Activated naive CD4-positive, alpha-beta T cell treated with anti-CD3 and anti-CD28 coated beads, Interleukin-2, amount 10 ng/mL, durations not matched to agents 7 days and 5 days (primary cell): ENCODE measurements at regions of chr22 and their contacts with region 1.

Region 1: GRCh38 chr22:36470162-36470993 is 11.1 kb downstream of the TXN2 start:
- DNase-seq: peak; percentile 90
- H3K4me3 Mint-ChIP-seq: no peak overlapping the region
- H3K27ac Mint-ChIP-seq: peak overlapping the region; percentile 52
- H3K4me1 Mint-ChIP-seq: peaks cover 35% of the 10 kb centered on the region
- H3K27me3 Mint-ChIP-seq: no peaks in the 10 kb centered on the region

Region 2: GRCh38 chr22:36156515-36157419 is 313.6 kb before region 1 on chr22:
- CTCF ChIA-PET with region 1: no interaction called
- DNase-seq: peak; percentile 73
- H3K4me3 Mint-ChIP-seq: peak overlapping the region; percentile 99
- H3K27ac Mint-ChIP-seq: peak overlapping the region; percentile 96
- H3K4me1 Mint-ChIP-seq: peaks cover 89% of the 10 kb centered on the region
- H3K27me3 Mint-ChIP-seq: no peaks in the 10 kb centered on the region

Region 3: DNA sequence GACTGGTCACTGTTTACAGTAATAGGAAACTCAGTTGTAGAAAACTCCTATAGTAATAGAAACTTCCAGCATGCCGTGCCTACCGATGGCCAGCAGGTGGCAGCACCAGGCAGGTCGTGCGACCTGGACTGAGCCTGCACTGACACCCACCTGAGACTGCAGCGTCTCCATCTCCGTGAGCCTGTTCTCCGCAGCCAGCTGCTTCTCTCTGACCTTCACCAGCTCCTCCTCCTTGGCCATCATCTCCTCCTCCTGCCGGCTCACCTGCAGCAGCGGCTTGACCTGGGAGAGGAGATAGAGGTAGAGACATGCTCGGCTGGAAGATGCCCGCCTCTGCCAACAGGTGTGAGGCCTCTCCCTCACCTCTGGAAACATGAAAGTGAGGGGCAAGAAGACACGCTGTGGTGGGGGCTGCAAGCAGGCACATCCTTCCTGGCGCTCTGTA is 169.0 kb before region 1 on chr22:
- CTCF ChIA-PET with region 1: interaction called, 88 read pairs
- DNase-seq: peak; percentile 87
- H3K4me3 Mint-ChIP-seq: no peak overlapping the region
- H3K27ac Mint-ChIP-seq: peak overlapping the region; percentile 74
- H3K4me1 Mint-ChIP-seq: peaks cover 12% of the 10 kb centered on the region
- H3K27me3 Mint-ChIP-seq: peaks cover 3% of the 10 kb centered on the region

Region 4: GRCh38 chr22:36323182-36323854 is 147.1 kb before region 1 on chr22:
- CTCF ChIA-PET with region 1: interaction called, 16 read pairs
- DNase-seq: no peak
- H3K4me3 Mint-ChIP-seq: no peak overlapping the region
- H3K27ac Mint-ChIP-seq: peak overlapping the region; percentile 33
- H3K4me1 Mint-ChIP-seq: peaks cover 24% of the 10 kb centered on the region
- H3K27me3 Mint-ChIP-seq: no peaks in the 10 kb centered on the region

Region 5: GRCh38 chr22:36331306-36331911 is 139.0 kb before region 1 on chr22:
- CTCF ChIA-PET with region 1: interaction called, 30 read pairs
- DNase-seq: peak; percentile 88
- H3K4me3 Mint-ChIP-seq: peak overlapping the region; percentile 87
- H3K27ac Mint-ChIP-seq: peak overlapping the region; percentile 99
- H3K4me1 Mint-ChIP-seq: peaks cover 99% of the 10 kb centered on the region
- H3K27me3 Mint-ChIP-seq: no peaks in the 10 kb centered on the region

Region 6: DNA sequence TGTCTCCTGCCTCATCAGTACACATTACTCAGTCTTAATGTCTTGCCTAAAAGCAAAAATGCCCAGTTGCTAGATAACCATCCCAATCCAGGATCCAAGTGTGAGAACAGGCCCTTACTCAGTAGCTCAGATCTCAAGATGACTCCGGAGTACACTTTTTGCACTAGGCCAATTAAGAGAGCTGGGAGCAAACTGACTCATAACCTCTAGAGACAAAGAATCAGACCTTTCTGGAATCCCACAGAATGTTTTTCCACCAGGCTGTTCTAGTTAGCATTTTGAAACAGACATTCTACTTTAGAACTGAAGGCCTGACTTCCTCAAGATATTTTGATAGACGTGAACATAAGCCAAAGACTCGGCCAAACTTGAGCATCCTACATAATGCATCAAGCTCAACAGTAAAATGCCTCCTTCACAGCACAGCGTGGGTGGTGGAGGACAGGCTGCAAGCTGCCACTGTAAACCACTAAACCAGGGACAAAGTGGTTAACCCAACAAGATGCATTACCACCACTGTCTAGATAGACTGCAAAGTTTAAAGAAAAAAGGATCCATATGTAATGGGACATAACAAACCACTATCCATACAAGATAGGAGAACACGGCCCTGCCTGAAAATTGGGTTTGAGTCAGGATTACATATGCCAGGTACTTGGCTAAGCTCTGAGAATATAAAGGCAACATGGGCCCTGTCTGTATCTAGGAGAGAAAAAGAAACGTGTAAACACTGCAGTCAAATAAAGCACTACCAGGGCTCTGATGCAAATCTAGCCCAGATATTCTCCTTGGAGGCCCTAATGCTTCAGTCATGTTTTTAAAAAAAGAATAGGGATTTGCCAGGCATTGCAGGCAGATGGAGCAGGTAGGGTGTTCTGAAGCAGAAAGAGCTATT is 131.0 kb before region 1 on chr22:
- CTCF ChIA-PET with region 1: interaction called, 30 read pairs
- DNase-seq: no peak
- H3K4me3 Mint-ChIP-seq: no peak overlapping the region
- H3K27ac Mint-ChIP-seq: peak overlapping the region; percentile 80
- H3K4me1 Mint-ChIP-seq: peaks cover 95% of the 10 kb centered on the region
- H3K27me3 Mint-ChIP-seq: no peaks in the 10 kb centered on the region

Region 7: GRCh38 chr22:36405671-36406538 is 64.5 kb before region 1 on chr22:
- CTCF ChIA-PET with region 1: interaction called, 13 read pairs
- DNase-seq: peak; percentile 75
- H3K4me3 Mint-ChIP-seq: peak overlapping the region; percentile 1
- H3K27ac Mint-ChIP-seq: peak overlapping the region; percentile 98
- H3K4me1 Mint-ChIP-seq: peaks cover 69% of the 10 kb centered on the region
- H3K27me3 Mint-ChIP-seq: no peaks in the 10 kb centered on the region